PC-9 (cell line): ENCODE measurements at regions of chr12 and their contacts with region 1.

Region 1: DNA sequence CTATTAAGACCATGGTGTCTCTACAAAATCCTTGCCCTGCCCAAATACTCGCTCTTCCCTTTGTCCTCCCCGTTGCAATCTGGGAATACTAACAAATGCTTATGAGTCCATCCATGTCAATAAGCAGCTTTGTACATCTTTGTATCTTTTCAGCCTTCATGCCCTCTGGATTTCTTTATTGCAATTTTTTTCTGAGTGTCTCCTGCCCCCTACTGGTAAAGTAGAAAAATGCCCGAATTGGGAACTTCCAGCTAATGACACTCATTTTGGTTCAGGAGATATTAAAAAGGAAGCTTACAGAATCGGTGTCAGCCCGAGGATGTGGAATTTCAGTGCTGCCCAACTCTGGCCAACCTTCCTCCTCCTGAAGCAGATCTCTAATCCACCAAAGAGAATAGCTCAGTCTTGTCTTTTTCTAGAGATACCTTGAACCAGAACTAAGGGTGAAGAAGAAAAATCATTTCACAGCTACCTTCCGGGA is 46.0 kb downstream of the SH2B3 start:
- DNase-seq: no peak
- H3K4me3 ChIP-seq: no peak overlapping the region
- H3K27ac ChIP-seq: no peak overlapping the region
- H3K4me1 ChIP-seq: no peaks in the 10 kb centered on the region
- H3K27me3 ChIP-seq: no peaks in the 10 kb centered on the region
- CTCF ChIP-seq: peak; percentile 93

Region 2: DNA sequence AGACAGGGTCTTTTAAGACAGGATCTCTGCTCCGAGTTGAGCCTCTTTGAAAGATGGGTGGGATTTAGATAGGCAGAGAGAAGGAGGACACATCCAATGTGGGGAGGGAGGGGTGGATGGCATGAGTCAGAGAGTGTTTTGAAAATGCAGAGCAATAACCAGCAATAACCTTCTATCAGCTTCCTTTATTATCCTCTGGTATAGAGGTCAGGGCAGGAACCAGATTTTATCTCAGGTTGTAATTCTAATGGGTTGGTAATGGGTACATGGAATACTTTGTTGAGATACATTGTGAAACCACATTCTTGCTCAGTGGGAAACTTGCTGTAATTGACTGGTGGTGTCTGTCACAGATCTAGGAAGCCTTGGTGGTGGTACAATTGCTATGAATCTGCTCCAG is 642.5 kb before region 1 on chr12:
- CTCF ChIA-PET with region 1: no interaction called
- POLR2A ChIA-PET with region 1: interaction called, 16 read pairs
- intact Hi-C with region 1: no loop called
- DNase-seq: peak in 1 of 2 experiments; percentile 68
- H3K4me3 ChIP-seq: no peak overlapping the region
- H3K27ac ChIP-seq: no peak overlapping the region
- H3K4me1 ChIP-seq: peaks cover 9% of the 10 kb centered on the region; the same call in 1 of the 2 replicates
- H3K27me3 ChIP-seq: peaks cover 10% of the 10 kb centered on the region; the same call in 1 of the 2 replicates
- CTCF ChIP-seq: no peak

Region 3: DNA sequence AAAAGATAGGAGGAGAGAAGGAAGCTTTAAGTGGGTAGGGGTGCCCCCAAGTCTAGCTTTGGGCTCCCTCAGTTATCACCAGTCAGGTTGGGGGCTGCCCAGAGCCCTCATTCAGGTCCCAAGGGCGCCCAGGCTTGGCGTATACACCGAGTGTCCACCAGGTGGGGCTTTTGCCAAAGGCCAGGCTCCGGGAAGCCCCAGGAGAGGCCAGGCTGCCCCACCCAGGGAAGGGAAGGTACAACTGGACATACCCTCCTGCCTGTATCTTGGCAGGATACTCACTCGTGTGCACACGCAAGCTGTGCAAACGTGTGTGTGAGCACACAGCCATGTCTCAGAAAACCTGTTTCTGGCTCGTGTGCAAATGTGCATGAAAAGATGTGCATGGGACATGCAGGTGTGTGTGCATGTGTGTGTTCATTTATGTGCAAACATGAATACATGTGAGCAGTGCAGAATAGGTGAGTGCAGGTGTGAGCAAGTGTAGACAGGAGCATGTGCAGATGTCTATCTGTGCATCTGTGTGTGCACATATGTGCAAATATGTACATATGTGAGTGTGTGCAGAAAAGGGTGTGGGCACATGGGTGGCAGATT is 427.4 kb before region 1 on chr12:
- CTCF ChIA-PET with region 1: interaction called, 10 read pairs
- POLR2A ChIA-PET with region 1: no interaction called
- intact Hi-C with region 1: no loop called
- DNase-seq: peak in 1 of 2 experiments; percentile 62
- H3K4me3 ChIP-seq: no peak overlapping the region
- H3K27ac ChIP-seq: no peak overlapping the region
- H3K4me1 ChIP-seq: no peaks in the 10 kb centered on the region
- H3K27me3 ChIP-seq: peaks cover 88% of the 10 kb centered on the region
- CTCF ChIP-seq: peak; percentile 89

Region 4: GRCh38 chr12:111330800-111331752 is 120.6 kb before region 1 on chr12:
- CTCF ChIA-PET with region 1: interaction called, 5 read pairs
- POLR2A ChIA-PET with region 1: no interaction called
- intact Hi-C with region 1: loop called (anchors 2 kb)
- DNase-seq: no peak
- H3K4me3 ChIP-seq: no peak overlapping the region
- H3K27ac ChIP-seq: no peak overlapping the region
- H3K4me1 ChIP-seq: no peaks in the 10 kb centered on the region
- H3K27me3 ChIP-seq: no peaks in the 10 kb centered on the region
- CTCF ChIP-seq: peak; percentile 47; the same call in 1 of the 2 replicates

Region 5: DNA sequence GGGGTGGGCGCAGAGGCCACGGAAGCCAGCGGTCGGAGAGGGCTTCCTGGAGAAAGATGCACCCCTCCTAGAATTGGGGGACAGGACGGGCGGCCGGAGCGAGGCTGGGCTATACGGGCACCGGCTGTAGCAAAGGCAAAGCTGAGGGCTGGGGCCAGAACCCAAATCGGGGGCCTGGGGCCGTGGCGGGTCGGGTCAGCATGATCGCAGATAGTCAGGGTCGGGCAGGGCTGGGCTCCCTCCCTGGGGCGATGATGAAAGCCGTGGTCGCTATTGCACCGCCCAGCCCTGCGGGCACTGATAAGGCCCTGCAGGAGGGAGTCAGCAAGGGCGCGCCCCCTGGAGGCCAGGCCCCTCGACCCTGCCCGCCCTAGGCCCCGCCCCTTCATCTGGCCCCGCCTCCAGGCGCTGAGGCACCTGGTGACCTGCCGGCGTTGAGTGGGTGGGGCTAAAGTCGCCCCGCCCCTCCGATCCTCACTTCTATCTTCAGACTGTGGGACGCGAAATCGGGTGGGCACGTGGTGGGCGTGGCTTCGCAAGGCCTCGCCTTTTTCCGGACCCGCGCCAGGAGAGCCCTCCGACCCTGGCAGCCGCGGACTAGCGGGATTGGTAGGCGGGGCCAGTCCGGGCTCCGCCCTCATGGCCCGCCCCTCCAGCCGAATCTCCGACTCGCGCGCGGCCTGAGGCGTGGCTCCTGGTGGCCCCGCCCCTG is 46.4 kb before region 1 on chr12:
- CTCF ChIA-PET with region 1: interaction called, 3 read pairs
- POLR2A ChIA-PET with region 1: no interaction called
- intact Hi-C with region 1: loop called (anchors 2 kb)
- DNase-seq: peak; percentile 80 to 97
- H3K4me3 ChIP-seq: peak overlapping the region; percentile 97
- H3K27ac ChIP-seq: 0 out of 2 replicates have a peak overlapping the region, but pooled peaks have one; percentile 30
- H3K4me1 ChIP-seq: peaks cover 49% of the 10 kb centered on the region
- H3K27me3 ChIP-seq: no peaks in the 10 kb centered on the region
- CTCF ChIP-seq: peak; percentile 65